GM10248 (cell line): ENCODE measurements at regions of chr1 and their contacts with region 1.

Region 1: GRCh38 chr1:181659321-181659957 is 176.1 kb downstream of the CACNA1E start:
- DNase-seq: no peak
- CTCF ChIP-seq: no peak

Region 2: GRCh38 chr1:181647314-181648195 is 11.9 kb before region 1 on chr1:
- CTCF ChIA-PET with region 1: interaction called, 11 read pairs
- POLR2A ChIA-PET with region 1: no interaction called
- DNase-seq: no peak
- CTCF ChIP-seq: no peak

Region 3: DNA sequence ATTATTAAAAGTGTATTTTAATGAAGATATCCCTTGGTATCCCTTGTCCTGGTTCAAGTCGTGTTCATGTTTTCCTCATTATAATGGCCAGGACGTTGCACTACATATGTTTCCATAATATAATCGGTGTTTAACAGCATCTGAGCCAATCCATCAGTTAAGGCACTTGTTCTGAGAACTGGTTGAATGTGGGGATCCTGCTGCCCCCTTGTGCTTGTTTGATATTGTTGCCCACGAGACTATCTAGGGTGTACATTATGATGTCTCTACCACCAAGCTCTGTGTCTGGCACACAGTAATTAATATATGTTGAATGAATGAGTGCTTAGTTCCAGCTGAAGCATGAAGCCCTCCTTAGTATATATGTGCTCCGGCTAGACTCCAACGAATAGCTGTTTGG is 16.8 kb after region 1 on chr1:
- CTCF ChIA-PET with region 1: interaction called, 12 read pairs
- POLR2A ChIA-PET with region 1: no interaction called
- DNase-seq: peak; percentile 71
- CTCF ChIP-seq: peak; percentile 39

Region 4: DNA sequence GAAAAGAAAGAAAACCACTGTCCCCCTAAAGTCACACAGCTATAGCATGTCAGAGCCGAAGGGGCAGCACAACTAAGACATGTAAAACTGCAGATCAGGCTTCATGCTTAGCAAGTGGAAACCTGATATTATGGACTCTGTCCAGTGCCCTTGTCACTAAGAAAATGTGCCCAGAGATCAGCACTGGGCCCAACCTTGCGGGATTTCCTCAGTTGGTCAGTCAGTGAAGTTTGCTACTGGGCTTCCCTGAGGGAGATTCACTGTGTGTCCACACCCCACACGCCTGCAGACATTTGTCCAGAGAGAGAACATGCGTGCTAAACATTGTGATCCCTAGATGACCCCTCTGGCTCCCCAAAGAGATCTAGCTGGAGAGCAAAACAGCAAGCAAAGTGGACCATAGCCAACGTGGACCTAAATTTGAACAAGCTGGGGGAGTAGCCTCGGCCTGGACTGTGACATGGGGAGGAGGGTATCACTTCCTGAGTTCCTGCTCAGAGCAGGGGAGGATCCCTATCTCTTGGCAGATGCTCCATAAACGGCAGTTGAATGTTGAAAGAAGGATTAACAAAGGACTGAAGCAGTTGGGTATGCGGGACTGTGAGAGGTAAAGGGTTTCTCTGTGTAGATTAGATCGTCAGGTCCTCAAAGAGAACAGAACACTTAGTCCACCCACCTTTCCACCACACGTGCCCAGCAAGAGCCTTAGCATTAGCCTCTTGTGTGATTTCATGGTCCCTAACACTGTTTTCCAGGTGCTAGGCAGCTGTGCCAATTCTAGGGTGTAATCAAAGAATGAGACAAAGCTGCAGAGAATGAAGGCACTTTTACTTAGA is 678.5 kb after region 1 on chr1:
- CTCF ChIA-PET with region 1: no interaction called
- POLR2A ChIA-PET with region 1: no interaction called
- DNase-seq: no peak
- CTCF ChIP-seq: no peak